A673 (cell line): ENCODE measurements at regions of chr9 and their contacts with region 1.

Region 1: GRCh38 chr9:14511452-14511851 is 181.8 kb downstream of the ZDHHC21 start:
- DNase-seq: no peak
- H3K4me3 ChIP-seq: no peak overlapping the region
- H3K27ac ChIP-seq: no peak overlapping the region
- H3K4me1 ChIP-seq: peaks cover 5% of the 10 kb centered on the region
- H3K27me3 ChIP-seq: no peaks in the 10 kb centered on the region
- CTCF ChIP-seq: no peak

Region 2: GRCh38 chr9:14554886-14555285 is 43.4 kb after region 1 on chr9:
- CTCF ChIA-PET with region 1: no interaction called
- POLR2A ChIA-PET with region 1: no interaction called
- intact Hi-C with region 1: loop called (anchors 2 kb)
- DNase-seq: peak; percentile 29
- H3K4me3 ChIP-seq: no peak overlapping the region
- H3K27ac ChIP-seq: no peak overlapping the region
- H3K4me1 ChIP-seq: no peaks in the 10 kb centered on the region
- H3K27me3 ChIP-seq: no peaks in the 10 kb centered on the region
- CTCF ChIP-seq: no peak